ENCODE measurements at regions of chr17 and their contacts with region 1.

Region 1: GRCh38 chr17:44556832-44557606 is at the start of gene FZD2:
- DNase-seq: peak; percentile 99
- ATAC-seq: peak; percentile 80
- H3K4me3 ChIP-seq: peak within 1 kb of the TSS; percentile 87
- H3K27ac ChIP-seq: peak within 1 kb of the TSS; percentile 91
- H3K4me1 ChIP-seq: peaks cover 14% of the 10 kb centered on the region
- H3K27me3 ChIP-seq: no peaks in the 10 kb centered on the region
- CTCF ChIP-seq: no peak
- POLR2A ChIP-seq: peak; percentile 58
- RAD21 ChIP-seq: no peak
- total RNA-seq, gene FZD2: 21.3 and 22.8 TPM in 2 replicates

Region 2: DNA sequence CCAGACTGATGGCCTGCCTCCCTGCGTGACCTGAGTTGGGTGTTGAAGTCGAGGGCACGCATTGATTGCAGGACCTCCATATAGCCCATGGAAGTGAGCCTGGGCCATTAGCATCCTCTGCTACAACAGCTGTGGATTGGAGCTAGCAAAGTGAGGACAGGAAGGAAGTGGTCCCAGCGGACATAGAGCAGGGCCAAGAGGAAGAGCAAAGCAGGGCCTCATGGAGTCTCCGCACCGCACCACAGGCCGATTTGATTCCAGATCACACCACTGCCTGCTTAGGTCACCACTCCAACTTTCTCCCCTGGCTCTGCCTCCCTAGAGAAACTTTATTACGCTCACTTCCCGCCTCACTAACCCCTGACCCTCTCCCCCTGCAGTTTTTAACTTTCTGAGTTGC is 326.9 kb before region 1 on chr17:
- CTCF ChIA-PET with region 1: no interaction called
- POLR2A ChIA-PET with region 1: interaction called, 12 read pairs
- dilution Hi-C with region 1: no loop called
- in situ Hi-C with region 1: no loop called
- intact Hi-C with region 1: no loop called
- DNase-seq: no peak
- ATAC-seq: no peak
- H3K4me3 ChIP-seq: no peak overlapping the region
- H3K27ac ChIP-seq: no peak overlapping the region
- H3K4me1 ChIP-seq: no peaks in the 10 kb centered on the region
- H3K27me3 ChIP-seq: peaks cover 18% of the 10 kb centered on the region; the same call in 1 of the 2 replicates
- CTCF ChIP-seq: no peak
- POLR2A ChIP-seq: no peak
- RAD21 ChIP-seq: no peak

Region 3: DNA sequence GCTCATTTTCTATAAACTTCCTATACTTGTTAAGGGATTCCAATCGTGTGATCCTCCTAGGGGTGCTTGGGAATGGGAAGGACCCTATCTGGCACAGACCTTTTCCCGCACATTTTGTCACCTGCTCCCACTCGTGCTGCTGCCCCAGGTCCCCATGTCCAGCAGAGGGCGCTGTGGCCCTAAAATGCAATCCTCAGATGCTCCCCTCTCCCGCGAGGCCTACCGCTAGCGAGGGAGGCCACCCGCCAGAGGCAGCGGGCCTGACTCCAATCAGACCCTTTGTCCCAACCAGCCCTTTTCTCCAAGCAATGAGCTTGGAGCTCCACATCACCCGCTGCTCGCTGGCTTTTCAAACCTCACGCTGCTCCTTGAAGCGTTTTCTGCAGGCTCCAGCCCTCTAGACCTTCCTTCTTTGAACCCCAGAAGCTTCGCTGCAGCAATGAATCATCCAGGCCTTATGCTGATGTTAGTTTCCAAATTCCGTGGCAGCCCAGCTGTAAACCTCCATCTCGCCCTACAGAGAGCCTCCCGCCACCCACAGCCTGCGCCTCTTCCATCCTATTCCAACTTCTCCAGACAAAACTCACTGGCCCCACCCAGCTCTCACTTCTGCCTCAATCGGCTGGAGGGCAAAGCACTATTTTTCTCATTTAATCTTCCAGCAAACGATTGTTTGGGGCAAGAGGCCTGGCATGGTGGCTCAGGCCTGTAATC is 23.3 kb before region 1 on chr17:
- CTCF ChIA-PET with region 1: interaction called, 8 read pairs
- POLR2A ChIA-PET with region 1: interaction called, 11 read pairs
- dilution Hi-C with region 1: no loop called
- in situ Hi-C with region 1: no loop called
- intact Hi-C with region 1: loop called (anchors 1 kb)
- DNase-seq: peak; percentile 90
- ATAC-seq: peak; percentile 83
- H3K4me3 ChIP-seq: peak overlapping the region; percentile 2; the same call in 1 of the 2 replicates
- H3K27ac ChIP-seq: peak overlapping the region; percentile 61
- H3K4me1 ChIP-seq: peaks cover 12% of the 10 kb centered on the region
- H3K27me3 ChIP-seq: no peaks in the 10 kb centered on the region
- CTCF ChIP-seq: peak; percentile 98
- POLR2A ChIP-seq: peak; percentile 60; the same call in 1 of the 2 replicates
- RAD21 ChIP-seq: peak; percentile 99

Region 4: GRCh38 chr17:44543213-44543904 is 13.7 kb before region 1 on chr17:
- CTCF ChIA-PET with region 1: interaction called, 3 read pairs
- POLR2A ChIA-PET with region 1: interaction called, 22 read pairs
- dilution Hi-C with region 1: no loop called
- in situ Hi-C with region 1: no loop called
- intact Hi-C with region 1: loop called (anchors 1 kb)
- DNase-seq: peak; percentile 96
- ATAC-seq: peak; percentile 78
- H3K4me3 ChIP-seq: peak overlapping the region; percentile 3; the same call in 1 of the 2 replicates
- H3K27ac ChIP-seq: peak overlapping the region; percentile 99
- H3K4me1 ChIP-seq: peaks cover 55% of the 10 kb centered on the region
- H3K27me3 ChIP-seq: no peaks in the 10 kb centered on the region
- CTCF ChIP-seq: no peak
- POLR2A ChIP-seq: peak; percentile 32; the same call in 1 of the 2 replicates
- RAD21 ChIP-seq: 0 out of 2 replicates have a peak, but pooled peaks have one; percentile 11

Measured in IMR-90 (cell line).